Right cardiac atrium (tissue), 5 donors: ENCODE measurements at regions of chr7 and their contacts with region 1.

Region 1: DNA sequence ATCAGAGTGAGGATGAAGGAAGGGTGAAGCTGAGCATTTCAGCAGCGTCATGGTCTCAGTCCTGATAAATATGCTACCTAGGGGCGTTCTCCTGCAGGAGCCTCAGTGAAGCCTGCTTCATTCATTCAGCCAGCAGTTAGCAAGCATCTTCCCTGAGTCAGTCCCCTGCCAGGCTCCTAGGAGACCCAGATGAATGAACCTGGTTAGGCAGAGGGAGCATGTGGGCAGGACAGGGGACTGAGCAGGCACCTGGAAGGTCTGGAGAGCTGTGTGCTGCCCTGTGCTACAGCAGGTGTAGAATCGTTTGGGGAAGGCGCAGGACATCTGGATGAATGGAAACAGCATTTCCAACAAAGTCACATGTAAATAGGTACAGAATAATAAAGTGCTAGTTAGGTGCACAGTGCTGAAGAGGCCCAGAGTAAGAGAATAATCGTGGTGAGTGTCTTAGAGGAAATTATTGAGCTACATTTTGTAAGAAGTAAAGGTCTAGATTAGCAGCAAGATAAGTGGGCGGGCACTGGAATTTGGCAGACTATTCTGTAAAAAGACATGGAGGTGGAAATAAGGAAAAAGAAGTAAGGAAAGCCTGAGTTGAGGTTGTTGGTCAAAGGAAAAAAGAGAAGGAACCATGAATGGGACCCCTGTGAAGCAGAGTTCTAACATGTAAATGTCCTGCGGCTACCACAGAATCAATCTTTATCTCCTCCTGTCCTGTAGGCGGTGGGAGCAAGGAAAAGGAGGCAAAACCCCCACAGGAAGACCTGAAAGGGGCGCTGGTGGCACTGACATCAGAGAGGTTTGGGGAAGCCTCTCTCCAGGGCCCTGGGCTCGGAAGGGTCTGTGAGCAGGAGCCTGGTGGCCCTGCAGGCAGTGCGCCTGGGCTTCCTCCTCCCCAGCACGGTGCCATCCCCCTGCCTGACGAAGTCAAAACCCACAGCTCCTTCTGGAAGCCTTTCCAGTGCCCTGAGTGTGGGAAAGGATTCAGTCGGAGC is 12.0 kb downstream of the ZSCAN25 start:
- DNase-seq: no peak
- ATAC-seq: peak in 1 of 2 donors; percentile 16
- H3K4me3 ChIP-seq: no peak overlapping the region
- H3K27ac ChIP-seq: no peak overlapping the region
- H3K4me1 ChIP-seq: no peaks in the 10 kb centered on the region
- H3K27me3 ChIP-seq: no peaks in the 10 kb centered on the region

Region 2: DNA sequence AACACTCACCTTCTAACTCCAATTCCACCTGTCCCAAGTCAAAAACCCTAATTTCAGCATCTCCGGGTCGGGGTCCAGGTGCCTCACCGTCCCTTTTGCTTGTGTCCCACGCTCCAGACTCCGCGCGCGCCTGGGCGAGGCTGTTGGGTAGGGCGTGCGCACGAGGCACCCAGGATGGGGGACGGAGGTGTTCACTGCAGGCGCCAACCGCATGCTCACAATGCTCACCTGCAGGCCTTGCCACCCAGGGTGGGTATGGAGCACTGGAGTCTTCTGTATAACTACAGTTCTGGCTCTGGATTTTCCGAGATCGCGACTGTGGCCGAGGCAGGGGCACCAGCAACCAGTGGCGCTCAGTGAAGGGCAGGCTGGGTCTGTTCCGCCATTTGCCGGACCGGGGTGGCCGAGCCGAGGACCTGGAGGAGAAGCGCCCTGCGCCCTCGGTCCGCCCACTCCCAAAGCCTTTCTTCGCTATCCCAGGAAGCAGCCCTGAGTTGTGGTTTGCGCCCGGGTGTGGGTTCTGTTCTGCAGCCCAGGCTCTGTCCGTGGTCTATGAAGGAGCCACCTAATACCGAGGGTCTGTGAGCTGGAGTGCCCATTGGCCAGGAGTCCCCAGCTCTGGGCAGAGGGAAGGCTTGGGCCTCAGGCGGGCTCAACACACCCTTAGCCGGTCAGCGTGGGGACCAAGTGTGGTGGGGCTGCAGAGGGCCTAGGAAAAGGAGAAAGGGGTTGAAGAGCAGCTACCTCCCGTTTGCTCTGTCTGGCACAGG is 85.5 kb before region 1 on chr7:
- intact Hi-C with region 1: loop called in 1 of 4 experiments (anchors 5 kb)
- DNase-seq: peak in 1 of 3 donors; percentile 49
- ATAC-seq: peak; percentile 25 to 45
- H3K4me3 ChIP-seq: no peak overlapping the region
- H3K27ac ChIP-seq: no peak overlapping the region
- H3K4me1 ChIP-seq: no peaks in the 10 kb centered on the region
- H3K27me3 ChIP-seq: no peaks in the 10 kb centered on the region